ENCODE measurements at regions of chr10 and their contacts with region 1.

Region 1: GRCh38 chr10:72319416-72320254 is 35.1 kb downstream of the DNAJB12 start:
- DNase-seq: peak; percentile 75
- ATAC-seq: peak; percentile 57
- H3K4me3 ChIP-seq: peak overlapping the region; percentile 33 to 52
- H3K27ac ChIP-seq: peak overlapping the region; percentile 89
- H3K4me1 ChIP-seq: peaks cover 78 to 92% of the 10 kb centered on the region in 2 experiments
- H3K27me3 ChIP-seq: no peaks in the 10 kb centered on the region
- CTCF ChIP-seq: no peak
- POLR2A ChIP-seq: no peak
- RAD21 ChIP-seq: no peak

Region 2: DNA sequence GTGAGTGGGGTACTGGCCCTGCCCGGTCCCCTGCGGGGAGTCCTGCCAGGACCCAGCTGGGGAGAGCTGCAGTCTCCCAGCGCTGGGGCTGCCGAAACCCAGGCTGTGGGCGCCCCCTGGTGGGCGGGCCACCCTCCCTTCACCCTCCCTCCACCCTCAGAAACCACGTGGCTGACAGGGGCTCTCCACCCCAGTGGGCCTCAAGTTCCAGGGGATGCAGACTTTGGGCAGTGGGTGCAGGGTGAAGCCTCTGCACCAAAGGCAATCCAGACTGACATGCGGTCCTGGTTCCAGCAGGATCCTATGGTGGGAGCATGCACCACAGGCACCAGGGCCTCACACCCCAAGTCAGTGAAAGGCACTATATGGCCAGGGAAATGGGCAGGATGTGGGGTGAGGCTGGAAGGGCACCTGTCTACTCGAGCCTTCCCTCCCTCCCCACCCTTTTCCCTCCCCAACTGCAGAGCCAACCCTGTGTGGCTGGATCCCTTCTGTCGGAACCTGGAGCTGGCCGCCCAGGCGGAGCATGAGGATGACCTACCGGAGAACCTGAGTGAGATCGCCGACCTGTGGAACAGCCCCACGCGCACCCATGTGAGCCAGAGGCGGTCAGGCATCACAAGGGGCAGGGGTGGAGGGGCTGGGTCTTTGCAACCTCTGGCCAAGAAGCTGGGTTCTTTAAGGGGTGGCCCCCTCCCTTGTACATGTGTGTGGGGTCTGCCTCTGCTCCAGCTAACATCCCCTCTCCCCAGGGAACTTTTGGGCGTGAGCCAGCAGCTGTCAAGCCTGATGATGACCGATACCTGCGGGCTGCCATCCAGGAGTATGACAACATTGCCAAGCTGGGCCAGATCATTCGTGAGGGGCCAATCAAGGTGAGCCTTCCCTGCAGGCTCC is 507.4 kb before region 1 on chr10:
- CTCF ChIA-PET with region 1: no interaction called
- POLR2A ChIA-PET with region 1: no interaction called
- RAD21 ChIA-PET with region 1: no interaction called
- intact Hi-C with region 1: no loop called
- DNase-seq: peak; percentile 10
- ATAC-seq: peak; percentile 95
- H3K4me3 ChIP-seq: no peak overlapping the region
- H3K27ac ChIP-seq: no peak overlapping the region
- H3K4me1 ChIP-seq: peaks cover 0 to 13% of the 10 kb centered on the region in 2 experiments; a peak in 2 of 4 replicates
- H3K27me3 ChIP-seq: no peaks in the 10 kb centered on the region
- CTCF ChIP-seq: peak; percentile 88 to 92 (median 89)
- POLR2A ChIP-seq: no peak
- RAD21 ChIP-seq: peak; percentile 96

Region 3: DNA sequence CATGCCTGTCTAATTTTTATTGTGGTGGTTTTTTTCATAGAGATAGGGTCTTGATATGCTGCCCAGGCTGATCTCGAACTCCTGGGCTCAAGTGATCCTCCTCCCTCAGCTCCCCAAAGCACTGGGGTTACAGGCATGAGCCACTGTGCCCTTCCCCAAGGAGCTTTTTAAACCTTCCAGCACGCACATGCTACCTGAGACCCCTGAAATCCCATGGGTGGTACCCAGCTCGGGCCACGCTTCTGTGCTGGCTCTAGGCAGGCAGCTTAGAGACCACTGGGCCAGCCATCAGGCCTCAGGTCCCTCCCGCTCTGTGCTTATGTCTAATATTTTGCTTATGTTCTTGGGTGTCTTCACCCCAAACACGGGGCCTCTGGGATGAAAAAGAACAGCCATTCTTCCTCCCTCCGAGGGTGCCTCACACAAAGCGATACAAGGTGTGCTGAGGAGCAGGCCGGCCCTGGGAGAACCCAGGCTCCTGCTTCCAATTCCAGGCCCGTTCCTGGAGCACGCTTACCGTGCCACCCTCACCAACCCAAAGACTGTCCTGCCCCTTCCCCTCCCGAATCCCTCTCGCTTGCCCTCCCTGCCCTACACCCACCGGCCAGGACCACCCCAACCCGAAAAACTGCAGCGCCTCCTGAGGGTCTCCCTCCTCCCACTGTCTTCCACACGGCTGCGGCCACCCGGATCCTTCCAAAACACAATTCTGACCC is 242.2 kb before region 1 on chr10:
- CTCF ChIA-PET with region 1: no interaction called
- POLR2A ChIA-PET with region 1: interaction called, 10 read pairs
- RAD21 ChIA-PET with region 1: no interaction called
- intact Hi-C with region 1: no loop called
- DNase-seq: no peak
- ATAC-seq: no peak
- H3K4me3 ChIP-seq: no peak overlapping the region
- H3K27ac ChIP-seq: no peak overlapping the region
- H3K4me1 ChIP-seq: peaks cover 22 to 31% of the 10 kb centered on the region in 2 experiments
- H3K27me3 ChIP-seq: no peaks in the 10 kb centered on the region
- CTCF ChIP-seq: no peak
- POLR2A ChIP-seq: no peak
- RAD21 ChIP-seq: no peak

Region 4: GRCh38 chr10:72254813-72255568 is 64.6 kb before region 1 on chr10:
- CTCF ChIA-PET with region 1: no interaction called
- POLR2A ChIA-PET with region 1: interaction called, 11 read pairs
- RAD21 ChIA-PET with region 1: interaction called in 1 of 2 experiments, 3 read pairs
- intact Hi-C with region 1: no loop called
- DNase-seq: no peak
- ATAC-seq: peak; percentile 88
- H3K4me3 ChIP-seq: peak overlapping the region; percentile 9 to 16; a peak in 3 of 4 replicates
- H3K27ac ChIP-seq: peak overlapping the region; percentile 63
- H3K4me1 ChIP-seq: peaks cover 24 to 48% of the 10 kb centered on the region in 2 experiments
- H3K27me3 ChIP-seq: no peaks in the 10 kb centered on the region
- CTCF ChIP-seq: no peak
- POLR2A ChIP-seq: no peak
- RAD21 ChIP-seq: peak; percentile 41

Region 5: GRCh38 chr10:72297968-72298773 is 21.5 kb before region 1 on chr10:
- CTCF ChIA-PET with region 1: no interaction called
- POLR2A ChIA-PET with region 1: interaction called, 180 read pairs
- RAD21 ChIA-PET with region 1: interaction called, 4 read pairs
- intact Hi-C with region 1: loop called (anchors 2 kb)
- DNase-seq: peak; percentile 94
- ATAC-seq: peak; percentile 90
- H3K4me3 ChIP-seq: peak overlapping the region; percentile 58 to 64
- H3K27ac ChIP-seq: peak overlapping the region; percentile 98
- H3K4me1 ChIP-seq: peaks cover 25 to 62% of the 10 kb centered on the region in 2 experiments
- H3K27me3 ChIP-seq: no peaks in the 10 kb centered on the region
- CTCF ChIP-seq: no peak
- POLR2A ChIP-seq: no peak
- RAD21 ChIP-seq: no peak

Region 6: GRCh38 chr10:72331601-72332422 is 12.2 kb after region 1 on chr10:
- CTCF ChIA-PET with region 1: interaction called, 5 read pairs
- POLR2A ChIA-PET with region 1: interaction called, 86 read pairs
- RAD21 ChIA-PET with region 1: interaction called in 1 of 2 experiments, 3 read pairs
- intact Hi-C with region 1: no loop called
- DNase-seq: peak; percentile 80
- ATAC-seq: peak; percentile 92
- H3K4me3 ChIP-seq: peak overlapping the region; percentile 22 to 28
- H3K27ac ChIP-seq: peak overlapping the region; percentile 92
- H3K4me1 ChIP-seq: peaks cover 50 to 63% of the 10 kb centered on the region in 2 experiments
- H3K27me3 ChIP-seq: no peaks in the 10 kb centered on the region
- CTCF ChIP-seq: peak in 2 of 3 experiments; percentile 38 to 50; a peak in 3 of 6 replicates
- POLR2A ChIP-seq: peak; percentile 36
- RAD21 ChIP-seq: no peak